Esophagus squamous epithelium (tissue), 5 donors: ENCODE measurements at regions of chr16 and their contacts with region 1.

Region 1: DNA sequence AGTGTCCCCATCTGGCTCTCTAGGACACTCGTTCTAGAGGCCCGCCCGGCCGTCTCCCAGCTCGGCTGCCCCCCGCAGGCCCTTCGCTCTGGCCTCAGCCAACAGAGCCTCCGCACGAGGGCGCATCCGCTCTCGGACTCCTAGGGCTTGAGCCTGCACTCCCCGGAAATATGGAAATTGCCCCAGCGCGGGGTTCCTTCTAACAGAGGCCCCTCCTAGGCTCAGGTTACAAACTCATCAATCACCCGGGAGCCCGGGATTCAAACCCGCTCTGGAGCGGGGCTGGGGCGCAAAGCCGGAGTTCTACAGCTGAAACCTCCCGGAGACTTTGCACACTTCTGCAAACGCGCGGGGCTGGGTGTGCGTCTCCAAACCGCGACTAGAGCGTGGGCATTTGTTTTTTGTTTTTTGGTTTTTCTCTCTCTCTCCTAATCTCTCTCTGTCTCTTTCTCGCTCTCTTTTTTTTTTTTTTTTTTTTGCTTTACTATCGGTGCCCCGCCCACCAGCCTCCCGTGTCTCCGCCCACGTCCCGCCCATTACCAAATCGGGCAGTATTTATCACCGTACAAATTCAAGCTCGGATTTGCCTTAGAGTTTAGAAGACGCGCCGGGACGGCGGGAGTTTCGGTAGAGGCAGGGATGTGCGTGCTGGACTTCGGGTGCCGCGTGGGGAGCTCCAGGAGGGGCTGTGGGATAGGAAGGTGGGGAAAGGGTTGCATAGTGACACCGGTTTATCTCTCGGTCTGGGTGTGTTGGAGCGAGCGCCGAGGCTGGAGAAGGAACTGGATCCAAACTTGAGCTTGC is 2.4 kb upstream of the FOXL1 start:
- DNase-seq: no peak
- H3K4me3 ChIP-seq: peak overlapping the region; percentile 22 to 65 (median 36)
- H3K27ac ChIP-seq: peak overlapping the region; percentile 15 to 72 (median 54)
- H3K4me1 ChIP-seq: peaks cover 7 to 36% (median 13%) of the 10 kb centered on the region in 3 donors
- H3K27me3 ChIP-seq: peaks cover 8 to 100% (median 35%) of the 10 kb centered on the region in 4 donors
- CTCF ChIP-seq: peak in 5 of 6 experiments; percentile 31 to 60 (median 42)
- POLR2A ChIP-seq: peak in 1 of 4 donors; percentile 34

Region 2: GRCh38 chr16:86424398-86425367 is 151.3 kb before region 1 on chr16:
- intact Hi-C with region 1: no loop called
- DNase-seq: no peak
- H3K4me3 ChIP-seq: no peak overlapping the region
- H3K27ac ChIP-seq: peak overlapping the region; percentile 14 to 72 (median 30)
- H3K4me1 ChIP-seq: peaks cover 0 to 14% (median 12%) of the 10 kb centered on the region in 3 donors
- H3K27me3 ChIP-seq: no peaks in the 10 kb centered on the region
- CTCF ChIP-seq: no peak
- POLR2A ChIP-seq: no peak

Region 3: DNA sequence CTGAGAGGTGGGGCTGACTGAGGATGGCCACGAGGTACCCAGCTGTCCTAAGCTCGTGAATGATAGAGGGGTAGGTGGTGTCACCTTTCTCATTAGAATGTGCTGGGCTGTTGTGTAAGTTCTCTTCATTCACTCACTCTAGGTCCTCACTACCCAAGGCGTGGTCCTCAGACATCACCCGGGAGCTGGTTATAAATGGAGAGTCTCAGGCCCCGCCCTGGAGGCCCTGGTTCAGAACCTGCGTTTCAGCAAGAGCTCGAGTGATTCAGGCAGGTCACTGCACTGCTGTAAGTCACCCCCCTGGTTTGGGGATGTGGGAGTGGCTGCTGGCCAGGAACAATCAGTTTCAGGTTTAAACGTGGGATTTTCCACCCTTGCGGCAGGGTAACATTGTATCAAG is 142.2 kb after region 1 on chr16:
- intact Hi-C with region 1: no loop called
- DNase-seq: no peak
- H3K4me3 ChIP-seq: no peak overlapping the region
- H3K27ac ChIP-seq: peak overlapping the region in 1 of 4 donors; percentile 52
- H3K4me1 ChIP-seq: peaks cover 0 to 20% (median 0%) of the 10 kb centered on the region in 3 donors
- H3K27me3 ChIP-seq: peaks cover 0 to 36% (median 0%) of the 10 kb centered on the region in 4 donors
- CTCF ChIP-seq: no peak
- POLR2A ChIP-seq: no peak

Region 4: GRCh38 chr16:86783636-86784626 is 208.0 kb after region 1 on chr16:
- intact Hi-C with region 1: no loop called
- DNase-seq: no peak
- H3K4me3 ChIP-seq: no peak overlapping the region
- H3K27ac ChIP-seq: no peak overlapping the region
- H3K4me1 ChIP-seq: peaks cover 0 to 13% (median 0%) of the 10 kb centered on the region in 3 donors
- H3K27me3 ChIP-seq: peaks cover 0 to 54% (median 0%) of the 10 kb centered on the region in 4 donors
- CTCF ChIP-seq: no peak
- POLR2A ChIP-seq: no peak

Region 5: GRCh38 chr16:86874141-86874540 is 298.2 kb after region 1 on chr16:
- intact Hi-C with region 1: loop called (anchors 10 kb)
- DNase-seq: no peak
- H3K4me3 ChIP-seq: no peak overlapping the region
- H3K27ac ChIP-seq: no peak overlapping the region
- H3K4me1 ChIP-seq: no peaks in the 10 kb centered on the region
- H3K27me3 ChIP-seq: peaks cover 0 to 95% (median 0%) of the 10 kb centered on the region in 4 donors
- CTCF ChIP-seq: peak in 5 of 6 experiments; percentile 48 to 85 (median 59)
- POLR2A ChIP-seq: no peak

Region 6: GRCh38 chr16:87602821-87603683 is 1027.1 kb after region 1 on chr16:
- intact Hi-C with region 1: no loop called
- DNase-seq: no peak
- H3K4me3 ChIP-seq: peak overlapping the region in 3 of 4 donors; percentile 8 to 48 (median 27)
- H3K27ac ChIP-seq: no peak overlapping the region
- H3K4me1 ChIP-seq: peaks cover 4 to 25% (median 9%) of the 10 kb centered on the region in 3 donors
- H3K27me3 ChIP-seq: peaks cover 13 to 96% (median 23%) of the 10 kb centered on the region in 4 donors
- CTCF ChIP-seq: no peak
- POLR2A ChIP-seq: no peak